ENCODE measurements at regions of chr21 and their contacts with region 1.

Region 1: GRCh38 chr21:36113647-36114428 is 21.0 kb upstream of the CBR3 start:
- DNase-seq: peak; percentile 78
- ATAC-seq: peak; percentile 46
- H3K4me3 ChIP-seq: peak overlapping the region; percentile 71
- H3K27ac ChIP-seq: peak overlapping the region; percentile 65
- H3K4me1 ChIP-seq: peaks cover 16% of the 10 kb centered on the region
- H3K27me3 ChIP-seq: no peaks in the 10 kb centered on the region
- CTCF ChIP-seq: no peak

Region 2: GRCh38 chr21:35940074-35940927 is 173.5 kb before region 1 on chr21:
- CTCF ChIA-PET with region 1: no interaction called
- POLR2A ChIA-PET with region 1: no interaction called
- intact Hi-C with region 1: loop called (anchors 2 kb)
- DNase-seq: peak; percentile 86
- ATAC-seq: peak; percentile 99
- H3K4me3 ChIP-seq: no peak overlapping the region
- H3K27ac ChIP-seq: no peak overlapping the region
- H3K4me1 ChIP-seq: peaks cover 4% of the 10 kb centered on the region
- H3K27me3 ChIP-seq: no peaks in the 10 kb centered on the region
- CTCF ChIP-seq: peak; percentile 91

Region 3: GRCh38 chr21:36028127-36029069 is 85.4 kb before region 1 on chr21:
- CTCF ChIA-PET with region 1: interaction called, 3 read pairs
- POLR2A ChIA-PET with region 1: no interaction called
- intact Hi-C with region 1: loop called (anchors 2 kb)
- DNase-seq: peak; percentile 89
- ATAC-seq: peak; percentile 97
- H3K4me3 ChIP-seq: no peak overlapping the region
- H3K27ac ChIP-seq: no peak overlapping the region
- H3K4me1 ChIP-seq: no peaks in the 10 kb centered on the region
- H3K27me3 ChIP-seq: no peaks in the 10 kb centered on the region
- CTCF ChIP-seq: peak; percentile 97

Region 4: GRCh38 chr21:36044056-36044455 is 69.8 kb before region 1 on chr21:
- CTCF ChIA-PET with region 1: no interaction called
- POLR2A ChIA-PET with region 1: interaction called, 6 read pairs
- intact Hi-C with region 1: loop called (anchors 1 kb)
- DNase-seq: peak; percentile 21
- ATAC-seq: peak; percentile 78
- H3K4me3 ChIP-seq: no peak overlapping the region
- H3K27ac ChIP-seq: peak overlapping the region; percentile 33
- H3K4me1 ChIP-seq: 0 out of 2 replicates have a peak, but pooled peaks cover 7% of the 10 kb centered on the region
- H3K27me3 ChIP-seq: no peaks in the 10 kb centered on the region
- CTCF ChIP-seq: no peak

Region 5: GRCh38 chr21:36060159-36060921 is 53.5 kb before region 1 on chr21 and contains the start of gene SETD4:
- CTCF ChIA-PET with region 1: no interaction called
- POLR2A ChIA-PET with region 1: interaction called, 3 read pairs
- intact Hi-C with region 1: loop called (anchors 1 kb)
- DNase-seq: peak; percentile 89
- ATAC-seq: peak; percentile 89
- H3K4me3 ChIP-seq: peak within 1 kb of the TSS; percentile 87
- H3K27ac ChIP-seq: peak within 1 kb of the TSS; percentile 84
- H3K4me1 ChIP-seq: peaks cover 21% of the 10 kb centered on the region
- H3K27me3 ChIP-seq: no peaks in the 10 kb centered on the region
- CTCF ChIP-seq: no peak
- total RNA-seq, gene SETD4: 12.5 and 17.0 TPM in 2 replicates

Region 6: DNA sequence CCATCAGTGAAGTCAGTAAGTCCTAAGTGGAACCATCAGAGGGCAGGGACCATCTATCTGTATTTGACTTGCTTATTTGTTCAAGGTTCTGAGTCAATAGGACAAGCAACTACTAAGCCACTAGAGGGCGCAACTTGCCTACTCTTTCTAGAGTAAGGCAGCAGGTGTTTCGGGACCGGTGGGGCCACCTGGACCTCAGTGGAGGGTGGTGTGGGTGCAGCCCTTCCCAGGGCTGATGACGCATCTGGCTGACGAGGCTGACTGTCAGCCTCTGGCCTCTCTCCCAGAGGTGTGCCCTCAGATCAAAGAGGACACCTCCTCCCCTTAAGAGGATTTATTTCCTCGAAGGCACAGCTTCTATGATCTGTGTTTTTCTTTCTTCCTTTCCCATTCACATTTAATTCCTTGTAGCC is 27.7 kb after region 1 on chr21:
- CTCF ChIA-PET with region 1: no interaction called
- POLR2A ChIA-PET with region 1: no interaction called
- intact Hi-C with region 1: no loop called
- DNase-seq: peak; percentile 100
- ATAC-seq: peak; percentile 99
- H3K4me3 ChIP-seq: no peak overlapping the region
- H3K27ac ChIP-seq: peak overlapping the region; percentile 84
- H3K4me1 ChIP-seq: peaks cover 19% of the 10 kb centered on the region
- H3K27me3 ChIP-seq: no peaks in the 10 kb centered on the region
- CTCF ChIP-seq: peak; percentile 96

Region 7: GRCh38 chr21:36615274-36615964 is 501.6 kb after region 1 on chr21:
- CTCF ChIA-PET with region 1: no interaction called
- POLR2A ChIA-PET with region 1: no interaction called
- intact Hi-C with region 1: no loop called
- DNase-seq: peak; percentile 27
- ATAC-seq: no peak
- H3K4me3 ChIP-seq: no peak overlapping the region
- H3K27ac ChIP-seq: no peak overlapping the region
- H3K4me1 ChIP-seq: peaks cover 23% of the 10 kb centered on the region
- H3K27me3 ChIP-seq: no peaks in the 10 kb centered on the region
- CTCF ChIP-seq: peak; percentile 53

Measured in PC-3 (cell line).